Activated CD4-positive, alpha-beta memory T cell treated with anti-CD3 and anti-CD28 coated beads for 36 hours (primary cell): ENCODE measurements at regions of chr18 and their contacts with region 1.

Region 1: GRCh38 chr18:34122724-34123334 is 101.9 kb downstream of the NOL4 start:
- DNase-seq: no peak
- H3K4me3 Mint-ChIP-seq: no peak overlapping the region
- H3K27ac Mint-ChIP-seq: no peak overlapping the region
- H3K4me1 Mint-ChIP-seq: no peaks in the 10 kb centered on the region
- H3K27me3 Mint-ChIP-seq: no peaks in the 10 kb centered on the region

Region 2: GRCh38 chr18:34322365-34323289 is 199.8 kb after region 1 on chr18:
- CTCF ChIA-PET with region 1: no interaction called
- POLR2A ChIA-PET with region 1: no interaction called
- intact Hi-C with region 1: loop called (anchors 2 kb)
- DNase-seq: peak; percentile 15
- H3K4me3 Mint-ChIP-seq: no peak overlapping the region
- H3K27ac Mint-ChIP-seq: no peak overlapping the region
- H3K4me1 Mint-ChIP-seq: no peaks in the 10 kb centered on the region
- H3K27me3 Mint-ChIP-seq: no peaks in the 10 kb centered on the region